ENCODE measurements at regions of chr12 and their contacts with region 1.

Region 1: DNA sequence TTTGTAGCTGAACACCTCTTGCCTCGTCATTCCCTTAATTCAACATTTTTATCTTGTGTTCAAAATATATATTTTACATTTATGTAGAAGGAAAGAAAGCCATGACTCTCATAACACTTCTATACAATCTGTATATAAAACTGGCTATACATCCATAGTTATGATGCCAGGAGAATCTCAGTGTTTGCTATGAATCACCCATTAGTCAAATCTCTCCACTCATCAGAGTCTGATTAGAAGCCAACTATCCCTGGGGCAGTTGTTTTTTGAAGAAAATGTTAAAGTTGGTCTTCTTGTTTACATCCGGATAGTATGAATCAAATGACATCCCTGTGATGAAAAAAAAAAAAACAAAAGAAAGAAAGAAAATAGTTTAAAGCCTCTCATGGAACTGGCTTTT is 503.9 kb downstream of the NELL2 start:
- DNase-seq: peak; percentile 98
- ATAC-seq: peak; percentile 74
- H3K4me3 ChIP-seq: no peak overlapping the region
- H3K27ac ChIP-seq: peak overlapping the region; percentile 16; the same call in 1 of the 2 replicates
- H3K4me1 ChIP-seq: peaks cover 34% of the 10 kb centered on the region
- H3K27me3 ChIP-seq: no peaks in the 10 kb centered on the region
- CTCF ChIP-seq: no peak

Region 2: GRCh38 chr12:44053550-44054243 is 318.6 kb before region 1 on chr12:
- CTCF ChIA-PET with region 1: no interaction called
- POLR2A ChIA-PET with region 1: no interaction called
- intact Hi-C with region 1: loop called (anchors 10 kb)
- DNase-seq: peak; percentile 63
- ATAC-seq: peak; percentile 58
- H3K4me3 ChIP-seq: no peak overlapping the region
- H3K27ac ChIP-seq: no peak overlapping the region
- H3K4me1 ChIP-seq: peaks cover 11% of the 10 kb centered on the region; the same call in 1 of the 2 replicates
- H3K27me3 ChIP-seq: no peaks in the 10 kb centered on the region
- CTCF ChIP-seq: no peak

Region 3: DNA sequence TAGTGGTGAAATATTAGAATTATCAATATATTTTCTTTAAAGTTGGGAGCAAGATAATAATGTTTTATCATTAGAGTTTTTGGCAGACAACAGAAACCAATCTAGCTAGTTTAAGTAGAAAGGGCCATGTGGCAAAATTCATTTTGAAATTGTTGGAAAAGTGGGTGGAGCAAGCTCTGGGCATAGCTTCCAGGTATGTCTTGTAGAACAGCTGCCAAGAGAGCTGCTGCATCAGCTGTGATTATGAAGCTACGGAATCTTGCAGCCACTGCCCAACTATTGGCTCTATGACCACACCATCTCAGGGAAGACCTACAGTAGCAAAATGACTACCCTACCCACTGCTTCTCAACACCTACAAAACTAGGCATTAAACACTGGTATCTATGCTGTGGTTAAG is 33.5 kb before region 1 on chr12:
- CTCF ChIA-PET with region 1: no interaction called
- POLR2A ChIA-PET with region 1: no interaction called
- intact Hi-C with region 1: no loop called
- DNase-seq: no peak
- ATAC-seq: no peak
- H3K4me3 ChIP-seq: no peak overlapping the region
- H3K27ac ChIP-seq: no peak overlapping the region
- H3K4me1 ChIP-seq: no peaks in the 10 kb centered on the region
- H3K27me3 ChIP-seq: no peaks in the 10 kb centered on the region
- CTCF ChIP-seq: no peak

Measured in PC-3 (cell line).